Aorta (tissue), 5 donors: ENCODE measurements at regions of chr2 and their contacts with region 1.

Region 1: GRCh38 chr2:138501425-138502283 is at the start of gene SPOPL:
- DNase-seq: peak; percentile 95 to 97
- ATAC-seq: peak; percentile 97
- H3K4me3 ChIP-seq: peak within 1 kb of the TSS; percentile 89 to 91
- H3K27ac ChIP-seq: peak within 1 kb of the TSS; percentile 47 to 97
- H3K4me1 ChIP-seq: peaks cover 0 to 3% of the 10 kb centered on the region in 2 donors
- H3K27me3 ChIP-seq: peaks cover 0 to 2% of the 10 kb centered on the region in 2 donors
- total RNA-seq, gene SPOPL: 38.8 to 39.9 TPM

Region 2: DNA sequence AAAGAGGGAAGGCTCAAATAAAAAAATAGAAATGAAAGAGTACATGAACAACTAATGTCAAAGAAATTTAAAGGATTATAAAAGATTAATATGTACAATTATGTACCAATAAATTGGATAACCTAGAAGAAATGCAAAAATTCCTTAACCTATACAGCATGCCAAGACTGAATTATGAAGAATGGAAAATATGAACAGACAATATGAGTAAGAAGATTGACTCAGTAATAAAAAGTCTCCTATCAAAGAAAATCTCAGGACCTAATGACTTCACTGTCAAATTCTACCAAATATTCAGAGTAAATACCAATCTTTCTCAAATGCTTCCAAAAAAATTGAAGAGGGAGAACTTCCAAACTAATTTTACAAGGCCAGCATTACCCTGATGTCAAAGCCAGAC is 120.3 kb before region 1 on chr2:
- intact Hi-C with region 1: no loop called
- DNase-seq: no peak
- ATAC-seq: no peak
- H3K4me3 ChIP-seq: no peak overlapping the region
- H3K27ac ChIP-seq: no peak overlapping the region
- H3K4me1 ChIP-seq: no peaks in the 10 kb centered on the region
- H3K27me3 ChIP-seq: no peaks in the 10 kb centered on the region

Region 3: GRCh38 chr2:138421315-138422301 is 80.0 kb before region 1 on chr2:
- intact Hi-C with region 1: loop called in 1 of 2 experiments (anchors 5 kb)
- DNase-seq: no peak
- ATAC-seq: peak; percentile 74
- H3K4me3 ChIP-seq: no peak overlapping the region
- H3K27ac ChIP-seq: no peak overlapping the region
- H3K4me1 ChIP-seq: no peaks in the 10 kb centered on the region
- H3K27me3 ChIP-seq: no peaks in the 10 kb centered on the region

Region 4: DNA sequence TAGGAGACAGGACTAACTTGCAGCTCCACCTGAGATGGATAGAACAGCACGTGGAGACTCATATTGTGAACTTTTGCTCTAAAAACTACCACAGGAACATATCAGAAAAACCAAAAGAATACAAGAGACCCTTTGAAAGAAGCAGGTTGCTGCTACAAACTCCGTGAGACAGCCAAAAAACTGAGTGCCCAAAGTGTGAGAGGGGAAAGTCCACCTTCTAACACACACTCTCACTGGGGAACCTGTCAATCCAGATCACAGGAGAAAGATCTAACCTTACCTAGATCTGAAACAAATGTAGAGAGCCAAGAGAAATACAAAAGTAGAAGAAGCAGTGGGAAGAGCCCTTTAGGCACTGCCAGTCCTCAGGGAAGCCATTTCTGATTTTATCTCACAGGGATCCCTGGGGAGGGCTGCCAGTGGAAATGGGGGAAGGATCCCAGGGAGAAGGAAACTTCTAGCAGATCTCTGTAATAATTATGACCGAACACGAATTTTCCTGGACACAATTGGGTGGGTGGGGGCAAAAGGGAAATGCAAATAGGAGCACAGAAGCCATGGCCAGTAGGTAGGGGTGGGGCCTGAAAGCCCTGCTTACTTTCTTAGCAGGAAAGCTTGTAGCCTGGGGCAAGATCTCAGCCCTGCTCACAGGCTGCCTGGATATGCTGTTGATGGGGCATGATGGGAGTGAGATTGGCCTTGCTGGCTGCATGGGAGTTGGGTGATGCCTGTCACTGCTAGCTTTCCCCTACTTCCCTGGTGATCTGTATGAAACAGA is 46.2 kb before region 1 on chr2:
- intact Hi-C with region 1: loop called in 1 of 2 experiments (anchors 5 kb)
- DNase-seq: no peak
- ATAC-seq: no peak
- H3K4me3 ChIP-seq: no peak overlapping the region
- H3K27ac ChIP-seq: no peak overlapping the region
- H3K4me1 ChIP-seq: no peaks in the 10 kb centered on the region
- H3K27me3 ChIP-seq: no peaks in the 10 kb centered on the region